ENCODE measurements at regions of chr16 and their contacts with region 1.

Region 1: DNA sequence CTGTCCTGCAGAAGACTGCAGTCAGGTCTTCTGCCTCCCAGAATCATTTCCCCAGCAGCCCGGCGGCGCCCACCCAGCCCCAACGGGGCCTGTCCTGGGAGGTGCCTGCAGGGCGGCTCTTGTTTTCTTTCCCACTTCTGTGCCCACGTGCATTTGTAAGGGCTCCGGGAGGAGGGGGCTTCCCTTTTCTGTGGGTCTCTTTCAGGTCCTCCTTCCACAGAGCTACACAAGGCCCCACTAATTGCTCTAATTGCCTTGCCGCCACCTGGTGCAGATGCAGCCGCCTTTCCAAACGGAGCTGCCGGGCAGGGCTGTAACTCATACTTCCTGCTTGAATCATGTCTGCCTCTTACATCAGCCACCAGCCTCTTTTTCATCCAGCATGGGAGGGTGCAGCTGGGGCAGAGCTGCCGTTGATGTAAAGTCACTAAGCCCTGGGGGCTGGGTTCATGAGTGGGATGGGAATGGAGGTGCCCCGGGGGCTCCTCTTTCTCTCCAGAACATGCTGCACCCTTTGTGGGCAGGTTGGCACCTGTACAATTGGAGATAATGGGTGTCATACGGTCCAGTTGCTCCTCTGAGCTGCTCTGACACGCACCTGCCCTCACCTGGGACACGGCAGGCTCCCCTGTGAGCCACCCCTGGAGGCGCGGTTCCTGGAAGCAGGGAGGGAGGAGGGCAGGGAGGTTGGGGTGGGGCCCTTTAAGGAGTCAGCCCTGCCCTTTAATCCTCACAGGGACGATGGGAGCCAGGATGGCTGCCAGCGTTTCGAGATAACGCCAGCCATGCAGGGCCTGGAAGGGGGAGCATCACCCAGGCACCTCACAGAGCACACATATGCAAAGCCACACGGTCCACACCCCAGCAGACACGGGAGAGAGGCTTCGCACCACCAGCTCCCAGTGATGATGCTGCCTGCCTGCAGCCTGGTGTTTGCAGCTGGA is 41.1 kb upstream of the KLHDC4 start:
- DNase-seq: no peak
- CTCF ChIP-seq: no peak

Region 2: GRCh38 chr16:87747626-87748414 is 59.1 kb before region 1 on chr16:
- CTCF ChIA-PET with region 1: no interaction called
- POLR2A ChIA-PET with region 1: no interaction called
- DNase-seq: no peak
- CTCF ChIP-seq: no peak

Region 3: DNA sequence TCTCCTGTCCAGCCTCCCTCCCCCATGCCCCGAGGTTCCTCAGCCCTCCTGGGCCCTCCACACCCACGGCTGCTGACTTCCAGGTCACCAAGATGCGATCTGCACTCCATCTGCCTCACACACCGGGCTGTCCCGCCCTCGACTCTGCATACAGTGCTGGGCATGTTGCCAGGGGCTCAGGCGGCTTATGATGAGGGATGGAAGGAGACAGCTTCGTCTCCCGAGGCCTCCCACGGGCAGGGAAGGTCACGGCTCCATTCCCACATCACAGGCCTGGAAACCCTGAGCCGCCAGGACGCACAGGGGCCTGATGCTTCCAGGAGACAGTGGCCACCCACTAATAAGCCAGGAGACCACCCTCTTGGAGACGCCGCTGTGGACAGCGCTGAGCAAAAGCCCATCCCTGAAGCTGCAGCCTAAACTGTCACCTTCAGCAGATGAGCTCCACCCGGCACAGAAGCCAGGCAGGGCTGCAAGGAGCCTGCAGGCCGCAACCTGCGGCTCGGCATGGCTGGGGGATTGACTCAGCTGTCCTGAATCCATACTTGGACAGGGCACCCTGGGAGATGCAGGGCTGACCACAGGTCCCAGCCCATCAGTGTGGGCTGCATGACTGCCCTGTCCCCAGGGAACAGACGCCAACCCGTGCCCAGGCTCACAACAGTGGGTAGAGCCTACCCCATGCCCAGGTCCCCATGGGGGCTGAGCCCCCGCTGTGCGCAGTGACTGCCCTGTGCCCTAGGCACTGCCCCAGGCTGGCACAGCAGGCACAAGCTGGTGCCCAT is 27.9 kb after region 1 on chr16:
- CTCF ChIA-PET with region 1: interaction called, 4 read pairs
- POLR2A ChIA-PET with region 1: interaction called, 12 read pairs
- DNase-seq: no peak
- CTCF ChIP-seq: no peak